ENCODE measurements at regions of chr2 and their contacts with region 1.

Region 1: GRCh38 chr2:68441179-68441993 is 25.7 kb downstream of the FBXO48 start:
- DNase-seq: peak; percentile 84
- H3K4me3 Mint-ChIP-seq: no peak overlapping the region
- H3K27ac Mint-ChIP-seq: peak overlapping the region; percentile 7
- H3K4me1 Mint-ChIP-seq: peaks cover 16% of the 10 kb centered on the region
- H3K27me3 Mint-ChIP-seq: peaks cover 10% of the 10 kb centered on the region

Region 2: DNA sequence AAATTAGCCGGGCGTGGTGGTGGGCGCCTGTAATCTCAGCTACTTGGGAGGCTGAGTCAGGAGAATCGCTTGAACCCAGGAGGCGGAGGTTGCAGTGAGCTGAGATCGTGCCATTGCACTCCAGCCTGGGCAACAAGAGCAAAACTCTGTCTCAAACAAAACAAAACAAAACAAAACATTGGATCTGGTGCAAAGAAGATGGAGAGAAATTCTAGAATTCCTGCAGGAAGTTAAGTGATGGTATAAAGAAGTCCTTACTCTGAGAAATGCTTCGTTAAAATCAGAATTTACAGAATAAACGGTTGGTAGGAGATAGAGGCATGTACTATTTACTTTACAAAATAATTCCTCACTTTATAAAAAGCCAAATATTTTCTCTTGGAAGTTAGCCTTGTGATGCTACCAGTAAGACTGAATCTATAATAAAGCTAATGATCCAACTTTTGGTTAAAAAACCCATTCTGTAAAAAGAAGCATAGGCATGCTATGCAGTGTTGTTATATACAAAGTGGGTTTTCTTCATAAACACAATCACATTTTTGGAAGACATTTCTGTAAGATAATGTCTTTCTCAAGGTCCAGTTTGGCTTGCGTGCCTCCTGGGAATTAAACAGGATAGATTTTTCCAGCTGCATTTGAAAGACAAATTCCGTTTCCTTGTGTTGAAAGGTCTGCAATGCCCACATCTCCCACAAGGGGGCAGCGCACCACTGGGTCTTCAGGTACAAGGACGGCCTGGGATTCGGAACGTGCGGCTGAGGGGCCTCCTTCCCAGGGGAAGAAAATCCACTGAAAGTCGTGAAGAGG is 319.3 kb before region 1 on chr2:
- CTCF ChIA-PET with region 1: interaction called, 16 read pairs
- POLR2A ChIA-PET with region 1: no interaction called
- DNase-seq: peak; percentile 79
- H3K4me3 Mint-ChIP-seq: no peak overlapping the region
- H3K27ac Mint-ChIP-seq: no peak overlapping the region
- H3K4me1 Mint-ChIP-seq: peaks cover 4% of the 10 kb centered on the region
- H3K27me3 Mint-ChIP-seq: no peaks in the 10 kb centered on the region

Region 3: DNA sequence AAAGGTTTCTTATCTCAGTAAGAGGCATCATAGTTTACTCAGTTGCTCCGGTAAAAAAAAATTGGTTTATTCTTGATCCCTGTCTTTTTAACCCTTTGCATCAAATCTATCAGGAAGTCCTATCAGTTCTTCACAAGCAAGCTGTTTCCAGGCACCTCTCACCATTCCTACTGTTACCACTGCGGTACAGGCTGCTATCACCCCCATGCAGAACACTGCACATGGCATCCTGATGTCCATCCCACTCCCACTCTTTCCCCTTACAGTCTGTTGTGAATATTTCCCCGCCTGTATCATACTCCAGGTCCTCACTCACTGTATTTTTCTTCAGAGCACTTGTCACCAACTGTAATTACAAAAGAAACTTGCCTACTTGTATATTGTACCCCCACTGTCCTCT is 116.3 kb before region 1 on chr2:
- CTCF ChIA-PET with region 1: no interaction called
- POLR2A ChIA-PET with region 1: no interaction called
- DNase-seq: no peak
- H3K4me3 Mint-ChIP-seq: no peak overlapping the region
- H3K27ac Mint-ChIP-seq: no peak overlapping the region
- H3K4me1 Mint-ChIP-seq: peaks cover 3% of the 10 kb centered on the region
- H3K27me3 Mint-ChIP-seq: peaks cover 48% of the 10 kb centered on the region

Region 4: DNA sequence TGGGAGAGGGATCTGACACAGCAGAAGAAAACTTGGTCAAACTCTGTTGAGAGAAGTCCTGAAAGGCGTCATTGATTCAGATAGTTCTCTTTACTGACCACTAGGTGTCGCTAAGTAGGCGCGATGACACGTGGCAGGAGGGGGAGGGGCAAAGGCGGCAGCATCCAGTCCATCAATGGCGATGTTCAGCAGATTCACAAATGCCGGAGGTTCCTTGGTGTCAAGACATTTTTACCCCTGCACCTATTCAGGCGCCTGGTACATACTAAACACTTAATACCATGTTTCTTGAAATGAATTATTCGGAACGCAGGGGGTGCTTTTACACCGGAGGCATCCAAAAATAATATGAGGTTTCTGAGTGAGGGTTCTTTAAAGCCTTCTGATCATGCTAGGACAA is 79.3 kb before region 1 on chr2:
- CTCF ChIA-PET with region 1: interaction called, 61 read pairs
- POLR2A ChIA-PET with region 1: interaction called, 3 read pairs
- DNase-seq: peak; percentile 83
- H3K4me3 Mint-ChIP-seq: no peak overlapping the region
- H3K27ac Mint-ChIP-seq: no peak overlapping the region
- H3K4me1 Mint-ChIP-seq: peaks cover 20% of the 10 kb centered on the region
- H3K27me3 Mint-ChIP-seq: no peaks in the 10 kb centered on the region

Region 5: DNA sequence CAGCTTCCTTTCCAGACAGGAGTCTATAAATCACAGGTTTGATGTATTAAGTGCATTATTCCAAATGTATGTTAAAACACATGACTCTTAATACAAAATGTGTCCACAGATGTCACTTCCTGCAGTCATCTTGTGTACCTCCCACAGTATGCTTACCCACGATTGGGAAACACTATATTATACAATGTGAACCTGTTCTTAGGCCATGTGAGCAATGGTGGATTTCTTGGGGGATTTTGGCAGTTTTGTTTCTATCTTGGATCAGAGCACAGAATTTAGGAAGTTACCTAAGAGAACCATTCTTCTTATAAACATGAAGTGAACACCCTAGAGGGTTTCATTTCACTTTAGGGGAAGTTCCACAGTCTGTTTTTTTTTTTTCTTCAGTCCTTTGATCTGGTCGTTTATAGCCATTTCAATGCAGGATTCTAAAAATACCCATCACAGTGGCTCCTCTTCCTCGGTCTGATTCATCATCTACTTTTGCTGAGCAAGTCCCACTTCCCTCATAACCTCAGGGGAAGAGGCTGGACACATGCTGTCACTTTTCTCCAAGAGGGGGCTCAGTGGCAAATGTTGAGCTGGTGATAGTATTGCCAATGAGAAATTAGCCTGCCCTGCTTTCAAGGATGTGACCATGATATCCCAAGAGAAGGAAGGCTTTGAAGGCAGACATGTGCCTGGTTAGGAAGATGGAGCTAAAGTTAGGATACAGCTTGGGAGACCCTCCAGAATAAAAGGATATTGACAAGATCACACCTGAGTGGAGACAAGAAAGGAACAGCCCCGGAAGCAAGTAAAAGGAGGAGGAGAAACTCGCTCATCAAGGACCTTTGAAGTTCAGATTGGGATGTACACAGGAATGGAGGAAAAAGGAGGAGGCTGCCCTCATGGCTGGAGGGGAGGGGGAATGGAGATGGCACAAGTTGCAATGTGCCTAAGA is 53.7 kb before region 1 on chr2:
- CTCF ChIA-PET with region 1: interaction called, 10 read pairs
- POLR2A ChIA-PET with region 1: interaction called, 6 read pairs
- DNase-seq: no peak
- H3K4me3 Mint-ChIP-seq: no peak overlapping the region
- H3K27ac Mint-ChIP-seq: peak overlapping the region; percentile 48
- H3K4me1 Mint-ChIP-seq: peaks cover 40% of the 10 kb centered on the region
- H3K27me3 Mint-ChIP-seq: peaks cover 6% of the 10 kb centered on the region

Region 6: DNA sequence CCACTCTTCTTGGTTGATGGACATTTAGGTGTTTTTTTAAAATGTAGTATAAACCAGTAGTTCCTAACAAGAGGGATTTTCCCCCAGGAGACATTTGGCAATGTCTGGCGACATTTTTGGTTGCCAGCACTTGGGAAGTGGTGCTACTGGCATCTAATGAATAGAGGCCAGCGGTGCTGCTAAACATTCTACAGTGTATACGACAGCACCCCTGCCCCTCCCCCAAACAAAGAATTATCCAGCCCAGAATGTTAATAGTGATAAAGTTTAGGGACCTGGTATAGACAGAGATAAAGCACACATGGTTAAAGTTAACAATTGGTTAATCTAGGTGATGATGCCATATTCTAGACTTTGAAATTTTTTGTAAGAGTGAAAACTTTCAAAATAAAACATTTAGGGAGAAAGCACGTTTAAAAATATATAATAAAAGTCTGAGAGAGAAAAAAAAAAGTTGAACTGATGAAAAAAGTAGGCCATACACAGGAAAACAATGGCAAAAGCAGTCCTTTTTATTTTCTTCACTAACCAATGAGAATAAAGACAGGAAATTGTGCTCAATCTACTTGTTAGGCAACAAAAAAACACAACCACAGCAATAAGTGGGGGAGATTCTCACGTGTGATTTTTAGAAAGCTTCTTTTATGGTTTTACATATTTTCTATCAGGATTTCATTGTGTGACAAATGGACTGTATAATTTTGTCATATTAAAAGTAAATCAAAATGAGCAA is 10.9 kb after region 1 on chr2:
- CTCF ChIA-PET with region 1: interaction called, 14 read pairs
- POLR2A ChIA-PET with region 1: no interaction called
- DNase-seq: no peak
- H3K4me3 Mint-ChIP-seq: no peak overlapping the region
- H3K27ac Mint-ChIP-seq: no peak overlapping the region
- H3K4me1 Mint-ChIP-seq: peaks cover 5% of the 10 kb centered on the region
- H3K27me3 Mint-ChIP-seq: no peaks in the 10 kb centered on the region

Measured in activated CD4-positive, alpha-beta memory T cell treated with anti-CD3 and anti-CD28 coated beads, Interleukin-2, amount 10 ng/mL, durations not matched to agents 7 days and 5 days (primary cell).